Activated CD8-positive, alpha-beta T cell treated with anti-CD3 and anti-CD28 coated beads for 36 hours (primary cell): ENCODE measurements at regions of chr2 and their contacts with region 1.

Region 1: DNA sequence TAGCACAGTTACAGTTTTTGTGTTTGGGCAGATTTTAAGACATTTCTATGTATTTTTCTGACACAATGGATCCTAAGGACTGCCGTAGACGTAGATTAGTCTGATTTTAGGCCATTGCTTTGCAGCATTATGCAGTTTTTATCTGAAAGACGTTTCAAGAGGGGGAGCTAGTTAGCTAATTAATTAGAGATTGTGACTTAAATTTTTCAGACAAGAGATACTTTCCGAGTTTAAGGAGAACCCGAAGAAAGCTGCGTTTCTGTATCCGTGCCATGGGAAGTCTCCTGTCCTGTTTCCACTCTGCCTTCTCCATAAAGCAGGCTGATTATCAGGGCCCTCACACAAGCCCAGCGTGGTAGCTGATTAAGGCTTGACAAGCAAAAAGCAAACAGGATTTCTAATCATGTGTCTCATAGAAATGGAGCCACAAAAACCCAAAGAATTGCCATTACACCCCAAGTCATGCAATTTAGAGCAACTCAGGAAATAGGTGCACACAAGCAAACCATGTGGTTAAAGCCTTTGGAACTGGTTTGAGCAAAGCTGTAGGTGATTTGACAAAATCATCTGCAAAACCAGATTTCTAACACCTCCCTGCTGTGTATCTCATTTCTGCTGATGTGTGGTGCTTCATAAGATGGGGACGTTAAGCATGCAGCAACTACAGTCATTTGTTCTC is 808.1 kb downstream of the RNF144A start:
- DNase-seq: peak; percentile 46
- ATAC-seq: peak; percentile 72
- H3K4me3 Mint-ChIP-seq: peak overlapping the region; percentile 81
- H3K27ac Mint-ChIP-seq: peak overlapping the region; percentile 90
- H3K4me1 Mint-ChIP-seq: peaks cover 37% of the 10 kb centered on the region
- H3K27me3 Mint-ChIP-seq: no peaks in the 10 kb centered on the region
- CTCF ChIP-seq: no peak

Region 2: GRCh38 chr2:7437716-7438632 is 287.3 kb before region 1 on chr2:
- CTCF ChIA-PET with region 1: no interaction called
- POLR2A ChIA-PET with region 1: interaction called, 29 read pairs
- intact Hi-C with region 1: loop called (anchors 5 kb)
- DNase-seq: peak; percentile 77
- ATAC-seq: peak; percentile 44
- H3K4me3 Mint-ChIP-seq: peak overlapping the region; percentile 15
- H3K27ac Mint-ChIP-seq: peak overlapping the region; percentile 93
- H3K4me1 Mint-ChIP-seq: peaks cover 88% of the 10 kb centered on the region
- H3K27me3 Mint-ChIP-seq: no peaks in the 10 kb centered on the region
- CTCF ChIP-seq: no peak

Region 3: DNA sequence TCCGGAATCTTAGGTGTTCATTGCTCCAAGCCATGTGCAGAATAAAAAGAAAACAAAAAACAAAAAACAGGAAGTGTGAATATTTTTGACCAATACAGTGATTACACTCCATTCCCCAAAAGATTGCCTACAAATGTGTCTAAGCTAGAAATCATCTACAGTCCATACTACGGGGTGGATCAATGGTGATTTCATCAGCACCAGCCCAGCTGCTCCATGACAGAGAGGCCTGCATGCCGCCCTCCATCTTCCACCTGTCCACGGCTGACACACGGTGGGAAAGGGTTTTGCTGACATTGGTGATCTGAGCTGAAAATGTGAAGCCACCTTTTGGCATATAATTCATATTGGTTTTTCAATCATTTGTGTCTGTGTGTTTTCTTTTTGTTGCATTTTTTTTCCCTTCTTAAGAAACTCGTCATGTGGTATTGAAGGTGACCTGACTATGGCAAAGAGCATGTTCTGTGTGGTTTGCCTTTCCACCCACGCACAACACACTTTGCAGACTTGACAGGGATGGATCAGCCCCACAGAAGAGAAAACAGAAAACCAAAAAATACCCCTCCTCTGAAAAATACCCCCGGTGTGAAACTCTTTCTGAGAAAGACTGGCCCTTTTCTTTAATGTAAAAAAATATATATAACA is 275.0 kb before region 1 on chr2:
- CTCF ChIA-PET with region 1: interaction called, 3 read pairs
- POLR2A ChIA-PET with region 1: interaction called, 22 read pairs
- intact Hi-C with region 1: no loop called
- DNase-seq: peak; percentile 92
- ATAC-seq: peak; percentile 73
- H3K4me3 Mint-ChIP-seq: peak overlapping the region; percentile 48
- H3K27ac Mint-ChIP-seq: peak overlapping the region; percentile 97
- H3K4me1 Mint-ChIP-seq: peaks cover 77% of the 10 kb centered on the region
- H3K27me3 Mint-ChIP-seq: no peaks in the 10 kb centered on the region
- CTCF ChIP-seq: no peak

Region 4: GRCh38 chr2:7567646-7568045 is 157.7 kb before region 1 on chr2:
- CTCF ChIA-PET with region 1: interaction called, 16 read pairs
- POLR2A ChIA-PET with region 1: interaction called, 7 read pairs
- intact Hi-C with region 1: no loop called
- DNase-seq: peak; percentile 89
- ATAC-seq: peak; percentile 95
- H3K4me3 Mint-ChIP-seq: peak overlapping the region; percentile 39
- H3K27ac Mint-ChIP-seq: peak overlapping the region; percentile 92
- H3K4me1 Mint-ChIP-seq: peaks cover 72% of the 10 kb centered on the region
- H3K27me3 Mint-ChIP-seq: no peaks in the 10 kb centered on the region
- CTCF ChIP-seq: peak; percentile 30

Region 5: DNA sequence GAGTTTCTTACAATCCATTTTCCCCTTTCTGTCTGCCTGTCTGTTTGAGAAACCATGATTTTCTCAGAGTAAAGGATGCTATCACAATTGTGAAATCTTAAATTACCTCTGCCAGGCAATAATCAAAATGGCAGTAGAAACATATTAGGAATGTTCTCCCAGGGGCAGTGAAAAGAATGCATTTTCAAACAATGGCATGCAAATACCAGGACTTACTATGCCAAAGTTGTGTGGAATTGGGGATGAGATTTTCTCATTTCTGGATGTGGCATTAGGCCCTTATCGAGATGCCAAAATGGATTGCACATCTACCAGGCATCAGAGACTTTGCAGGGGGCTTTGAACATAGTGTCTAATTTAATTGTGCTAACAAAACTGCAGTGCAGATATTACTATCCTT is 13.3 kb after region 1 on chr2:
- CTCF ChIA-PET with region 1: interaction called, 9 read pairs
- POLR2A ChIA-PET with region 1: interaction called, 11 read pairs
- intact Hi-C with region 1: no loop called
- DNase-seq: no peak
- ATAC-seq: no peak
- H3K4me3 Mint-ChIP-seq: no peak overlapping the region
- H3K27ac Mint-ChIP-seq: no peak overlapping the region
- H3K4me1 Mint-ChIP-seq: peaks cover 67% of the 10 kb centered on the region
- H3K27me3 Mint-ChIP-seq: no peaks in the 10 kb centered on the region
- CTCF ChIP-seq: no peak